WTC11 (cell line): ENCODE measurements at regions of chr19 and their contacts with region 1.

Region 1: GRCh38 chr19:38647368-38647965 is at the start of gene ACTN4:
- DNase-seq: peak; percentile 100
- ATAC-seq: peak; percentile 83
- H3K4me3 Mint-ChIP-seq: peak within 1 kb of the TSS; percentile 94
- H3K27ac Mint-ChIP-seq: peak within 1 kb of the TSS; percentile 93
- H3K4me1 Mint-ChIP-seq: peaks cover 52% of the 10 kb centered on the region
- H3K27me3 Mint-ChIP-seq: no peaks in the 10 kb centered on the region
- CTCF ChIP-seq: no peak
- total RNA-seq, gene ACTN4: 484 to 511 TPM (median 506 TPM) in 3 replicates

Region 2: DNA sequence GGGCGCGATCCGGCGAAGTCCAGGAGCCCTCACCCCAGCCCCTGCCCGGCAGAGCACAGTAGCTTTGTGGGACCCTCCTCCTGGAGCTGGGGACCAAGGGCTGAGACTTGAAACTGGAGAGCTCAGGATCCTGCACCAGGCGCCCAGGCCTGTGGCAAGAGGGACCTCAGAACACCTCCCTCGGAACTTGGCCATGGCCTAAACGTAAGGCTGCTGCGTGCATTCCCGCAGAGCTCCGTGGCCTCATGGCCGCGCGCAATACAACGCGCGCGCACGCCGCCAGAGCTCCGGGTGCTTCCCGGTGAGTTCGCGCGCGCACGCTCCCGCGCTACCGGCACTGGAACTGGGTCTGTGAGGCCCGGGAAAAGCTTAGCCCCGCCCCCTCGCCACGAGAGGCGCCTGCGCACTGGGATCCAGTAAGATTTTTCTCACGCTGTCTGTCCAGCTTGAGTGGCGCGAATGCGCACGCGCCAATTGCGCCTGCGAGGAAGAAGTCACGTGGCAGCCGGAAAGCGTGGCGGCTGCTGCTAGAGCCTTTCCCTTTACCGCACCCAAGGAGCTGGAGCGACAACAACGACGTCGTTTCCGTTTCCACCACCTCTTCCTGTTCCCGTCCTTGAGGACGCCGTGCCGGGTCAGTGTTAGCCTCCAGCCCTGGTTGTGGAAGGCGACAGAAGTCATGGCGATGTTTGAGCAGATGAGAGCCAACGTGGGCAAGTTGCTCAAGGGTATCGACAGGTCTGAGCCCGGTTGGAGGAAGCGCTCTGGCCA is 28.7 kb before region 1 on chr19 and contains the start of gene EIF3K:
- CTCF ChIA-PET with region 1: interaction called, 5 read pairs
- POLR2A ChIA-PET with region 1: interaction called, 13 read pairs
- DNase-seq: peak; percentile 99
- ATAC-seq: peak; percentile 85
- H3K4me3 Mint-ChIP-seq: peak within 1 kb of the TSS; percentile 100
- H3K27ac Mint-ChIP-seq: peak within 1 kb of the TSS; percentile 99
- H3K4me1 Mint-ChIP-seq: peaks cover 45% of the 10 kb centered on the region
- H3K27me3 Mint-ChIP-seq: no peaks in the 10 kb centered on the region; the same call in 1 of the 2 replicates
- CTCF ChIP-seq: no peak
- total RNA-seq, gene EIF3K: 389 to 416 TPM (median 410 TPM) in 3 replicates

Region 3: DNA sequence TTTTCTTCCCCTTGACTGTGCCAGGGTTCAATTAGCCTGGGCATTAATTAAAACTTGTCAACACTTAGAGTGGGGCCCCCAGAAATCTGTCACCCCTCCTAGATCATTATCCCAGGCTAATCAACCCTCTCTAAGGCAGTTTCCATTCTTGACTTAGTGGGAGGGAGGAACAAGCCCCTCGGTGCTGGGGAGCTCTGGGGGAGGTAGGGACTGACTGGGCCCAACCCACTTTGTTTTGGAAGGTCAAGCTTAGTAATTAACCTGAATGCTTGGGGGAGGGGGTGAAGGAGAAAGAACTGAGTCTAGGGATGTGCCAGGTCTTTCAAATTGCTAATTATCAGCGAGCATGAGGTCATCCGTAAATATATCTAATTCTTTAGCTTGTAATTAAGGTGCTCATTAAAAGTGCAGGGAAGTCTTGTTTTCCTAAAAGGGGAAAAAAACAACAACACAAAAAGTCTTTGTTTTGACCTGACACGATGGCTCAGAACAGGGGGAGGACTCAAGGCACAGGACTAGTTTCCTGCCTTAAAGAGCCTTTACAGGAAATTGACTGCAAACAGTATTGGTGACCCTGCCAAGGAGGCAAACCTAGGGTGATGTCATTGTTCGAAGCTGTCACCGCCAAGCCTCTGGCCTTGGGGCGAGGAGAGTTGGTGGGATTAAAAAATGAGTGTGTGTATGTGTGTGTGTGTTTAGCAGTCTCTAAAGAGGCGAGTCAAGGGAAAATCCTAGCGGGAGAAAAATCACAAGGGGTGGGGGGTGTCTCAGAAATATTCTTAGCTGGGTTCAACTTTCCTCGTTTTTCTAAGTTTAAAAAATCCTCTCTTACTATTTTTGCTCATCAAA is 19.4 kb after region 1 on chr19:
- CTCF ChIA-PET with region 1: interaction called, 4 read pairs
- POLR2A ChIA-PET with region 1: interaction called, 44 read pairs
- DNase-seq: no peak
- ATAC-seq: peak; percentile 34
- H3K4me3 Mint-ChIP-seq: peak overlapping the region; percentile 34
- H3K27ac Mint-ChIP-seq: peak overlapping the region; percentile 100
- H3K4me1 Mint-ChIP-seq: peaks cover 98% of the 10 kb centered on the region
- H3K27me3 Mint-ChIP-seq: no peaks in the 10 kb centered on the region
- CTCF ChIP-seq: no peak

Region 4: GRCh38 chr19:38683393-38684080 is 36.1 kb after region 1 on chr19:
- CTCF ChIA-PET with region 1: interaction called, 11 read pairs
- POLR2A ChIA-PET with region 1: interaction called, 23 read pairs
- DNase-seq: peak; percentile 81
- ATAC-seq: peak; percentile 67
- H3K4me3 Mint-ChIP-seq: peak overlapping the region; percentile 40; the same call in 1 of the 2 replicates
- H3K27ac Mint-ChIP-seq: peak overlapping the region; percentile 99
- H3K4me1 Mint-ChIP-seq: peaks cover 78% of the 10 kb centered on the region
- H3K27me3 Mint-ChIP-seq: no peaks in the 10 kb centered on the region
- CTCF ChIP-seq: no peak